Left ventricle myocardium inferior (tissue), 1 donor: ENCODE measurements at regions of chr20 and their contacts with region 1.

Region 1: GRCh38 chr20:58980700-58981627 is at the start of gene NELFCD:
- DNase-seq: peak; percentile 89
- H3K4me3 ChIP-seq: peak within 1 kb of the TSS; percentile 74
- H3K27ac ChIP-seq: peak within 1 kb of the TSS; percentile 91
- H3K4me1 ChIP-seq: peaks cover 51% of the 10 kb centered on the region
- H3K27me3 ChIP-seq: no peaks in the 10 kb centered on the region
- CTCF ChIP-seq: no peak
- total RNA-seq, gene NELFCD: 30.4 TPM

Region 2: DNA sequence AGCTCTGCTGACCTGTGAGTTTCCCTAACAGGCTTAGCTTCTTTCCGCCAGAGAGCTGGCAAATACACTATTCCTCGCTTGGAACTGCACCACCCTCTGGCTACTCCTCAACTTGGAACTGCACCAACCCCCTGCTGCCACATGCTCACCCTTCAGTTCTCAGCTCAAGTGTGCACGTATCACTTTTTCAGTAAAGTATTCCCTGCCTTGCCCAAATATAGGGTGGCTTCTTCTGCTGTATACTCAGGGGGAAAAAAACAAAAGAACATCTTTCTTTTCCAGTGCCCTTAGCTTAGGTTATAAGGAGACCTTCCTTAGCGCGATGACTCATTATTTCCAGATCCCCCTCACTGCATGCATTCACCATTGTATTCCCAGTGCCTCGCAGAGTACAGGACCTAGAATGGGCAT is 151.4 kb before region 1 on chr20:
- intact Hi-C with region 1: no loop called
- DNase-seq: peak; percentile 53
- H3K4me3 ChIP-seq: no peak overlapping the region
- H3K27ac ChIP-seq: peak overlapping the region; percentile 27
- H3K4me1 ChIP-seq: peaks cover 4% of the 10 kb centered on the region
- H3K27me3 ChIP-seq: peaks cover 29% of the 10 kb centered on the region
- CTCF ChIP-seq: peak; percentile 24

Region 3: GRCh38 chr20:58907399-58908137 is 73.4 kb before region 1 on chr20:
- intact Hi-C with region 1: loop called (anchors 10 kb)
- DNase-seq: peak; percentile 85
- H3K4me3 ChIP-seq: peak overlapping the region; percentile 53
- H3K27ac ChIP-seq: peak overlapping the region; percentile 89
- H3K4me1 ChIP-seq: peaks cover 66% of the 10 kb centered on the region
- H3K27me3 ChIP-seq: no peaks in the 10 kb centered on the region
- CTCF ChIP-seq: no peak

Region 4: DNA sequence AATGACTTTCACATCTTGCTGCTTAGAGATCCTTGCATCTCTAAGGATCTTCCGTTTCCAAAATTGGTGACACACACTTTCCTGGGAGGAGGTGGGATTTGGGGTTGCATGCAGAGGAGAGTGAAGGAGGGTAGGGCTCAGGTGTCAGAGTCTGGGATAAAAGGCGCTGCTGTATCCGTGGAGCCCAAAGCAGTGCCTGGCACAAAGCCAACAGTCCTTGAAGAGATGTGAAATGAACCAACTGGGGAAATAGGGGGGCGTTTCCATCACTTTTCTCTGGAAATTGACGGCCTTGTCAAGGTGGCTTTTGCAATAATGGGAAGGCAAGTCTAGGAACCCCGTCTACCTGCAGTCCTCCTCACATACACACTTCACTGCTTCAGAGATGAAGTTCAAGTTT is 59.4 kb before region 1 on chr20:
- intact Hi-C with region 1: loop called (anchors 10 kb)
- DNase-seq: no peak
- H3K4me3 ChIP-seq: no peak overlapping the region
- H3K27ac ChIP-seq: no peak overlapping the region
- H3K4me1 ChIP-seq: peaks cover 5% of the 10 kb centered on the region
- H3K27me3 ChIP-seq: no peaks in the 10 kb centered on the region
- CTCF ChIP-seq: no peak